HEK293T (cell line): ENCODE measurements at regions of chr10 and their contacts with region 1.

Region 1: GRCh38 chr10:42782446-42783180 is at the start of gene BMS1:
- DNase-seq: peak; percentile 82

Region 2: GRCh38 chr10:42583828-42584227 is 198.8 kb before region 1 on chr10:
- CTCF ChIA-PET with region 1: no interaction called
- POLR2A ChIA-PET with region 1: no interaction called
- DNase-seq: no peak

Region 3: GRCh38 chr10:42753126-42753506 is 29.5 kb before region 1 on chr10:
- CTCF ChIA-PET with region 1: interaction called, 3 read pairs
- POLR2A ChIA-PET with region 1: interaction called, 10 read pairs
- DNase-seq: peak; percentile 74

Region 4: DNA sequence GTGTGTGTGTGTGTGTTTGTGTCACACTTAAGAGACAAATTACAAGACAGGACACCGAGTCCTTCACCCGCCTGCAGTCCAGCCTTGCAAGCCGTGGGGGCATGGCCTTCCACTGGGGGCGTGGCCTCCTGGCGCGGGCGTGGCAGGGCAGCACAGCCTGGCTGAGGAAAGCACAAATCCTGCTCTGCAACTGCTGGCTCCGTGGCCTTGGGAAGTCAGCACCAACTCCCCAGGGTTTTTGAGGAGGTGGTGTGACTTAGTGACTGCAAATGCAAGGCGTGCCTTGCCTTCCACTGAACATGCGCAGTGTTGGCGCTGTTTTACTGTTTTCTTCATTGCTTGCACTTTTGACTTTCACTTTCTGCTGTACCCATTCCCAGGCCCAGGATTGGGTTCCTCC is 13.0 kb before region 1 on chr10:
- CTCF ChIA-PET with region 1: no interaction called
- POLR2A ChIA-PET with region 1: interaction called, 14 read pairs
- DNase-seq: no peak

Region 5: DNA sequence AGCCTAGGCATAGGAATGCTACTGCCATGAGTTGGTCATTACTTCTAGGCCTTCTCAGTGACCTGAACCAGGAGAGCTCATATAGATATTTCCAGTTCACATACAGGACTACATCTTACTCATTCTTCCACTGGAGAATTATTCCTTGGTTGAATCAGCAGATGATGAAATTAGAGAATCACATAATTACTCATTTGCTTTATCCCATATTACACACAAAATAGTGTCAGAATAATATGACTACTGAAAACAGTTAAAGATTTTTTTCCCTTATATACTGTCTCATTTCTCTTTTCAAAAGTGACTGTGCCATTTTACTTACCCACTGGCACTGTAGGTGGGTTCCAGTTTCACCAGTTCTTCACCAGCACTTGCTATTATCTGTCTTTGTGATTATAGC is 18.5 kb after region 1 on chr10:
- CTCF ChIA-PET with region 1: no interaction called
- POLR2A ChIA-PET with region 1: interaction called, 10 read pairs
- DNase-seq: no peak

Region 6: DNA sequence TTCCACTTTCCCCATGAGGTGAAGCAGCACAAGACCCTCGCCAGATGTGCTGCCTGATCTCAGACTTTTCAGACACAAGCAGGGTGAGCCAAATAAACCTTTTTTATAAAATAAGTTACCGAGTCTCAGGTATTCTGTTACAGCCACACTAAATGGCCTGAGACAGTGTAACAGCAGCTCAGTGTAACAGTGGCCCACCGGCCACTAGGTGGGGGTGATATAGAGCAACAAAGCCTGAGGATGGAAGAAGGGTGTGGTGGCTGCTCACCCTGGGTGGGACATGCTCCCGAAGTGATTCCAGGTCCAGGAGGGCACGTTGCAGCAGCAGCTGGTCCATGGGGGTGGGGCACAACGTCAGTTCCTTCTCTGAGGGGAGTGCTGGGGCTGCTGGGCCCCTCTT is 44.6 kb after region 1 on chr10:
- CTCF ChIA-PET with region 1: no interaction called
- POLR2A ChIA-PET with region 1: no interaction called
- DNase-seq: no peak